Activated T-helper 1 cell treated with anti-CD3 and anti-CD28 coated beads, Interleukin-12 subunit alpha, Interleukin-12 subunit beta, Interleukin-2, Interleukin-4 antibody, amounts not matched to agents 30 ng/mL and 10 ng/mL and 1 ng/mL, durations not matched to agents 14 hours and 24 hours and 36 hours (primary cell): ENCODE measurements at regions of chr3 and their contacts with region 1.

Region 1: DNA sequence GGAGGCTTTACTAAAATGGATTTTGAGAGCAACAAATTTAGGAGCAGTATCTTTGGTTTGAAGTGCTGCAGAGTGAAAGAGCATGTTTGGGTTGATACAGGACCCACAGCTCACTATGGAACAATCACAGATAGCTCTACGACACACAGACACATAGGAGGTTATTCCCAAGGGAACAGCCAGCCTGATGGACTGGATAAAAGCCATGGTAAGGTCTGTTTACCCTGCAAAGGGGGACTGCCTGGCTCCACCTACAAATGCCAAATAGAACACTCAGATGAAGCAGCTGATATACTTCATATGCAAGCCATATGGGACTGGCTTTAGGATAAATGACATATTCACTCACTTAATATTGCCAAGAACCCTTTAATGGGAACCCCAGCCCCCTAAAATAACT is 75.4 kb downstream of the CDC25A start:
- DNase-seq: no peak
- H3K4me3 Mint-ChIP-seq: peak overlapping the region; percentile 38
- H3K27ac Mint-ChIP-seq: peak overlapping the region; percentile 76
- H3K4me1 Mint-ChIP-seq: peaks cover 17% of the 10 kb centered on the region
- H3K27me3 Mint-ChIP-seq: peaks cover 2% of the 10 kb centered on the region

Region 2: DNA sequence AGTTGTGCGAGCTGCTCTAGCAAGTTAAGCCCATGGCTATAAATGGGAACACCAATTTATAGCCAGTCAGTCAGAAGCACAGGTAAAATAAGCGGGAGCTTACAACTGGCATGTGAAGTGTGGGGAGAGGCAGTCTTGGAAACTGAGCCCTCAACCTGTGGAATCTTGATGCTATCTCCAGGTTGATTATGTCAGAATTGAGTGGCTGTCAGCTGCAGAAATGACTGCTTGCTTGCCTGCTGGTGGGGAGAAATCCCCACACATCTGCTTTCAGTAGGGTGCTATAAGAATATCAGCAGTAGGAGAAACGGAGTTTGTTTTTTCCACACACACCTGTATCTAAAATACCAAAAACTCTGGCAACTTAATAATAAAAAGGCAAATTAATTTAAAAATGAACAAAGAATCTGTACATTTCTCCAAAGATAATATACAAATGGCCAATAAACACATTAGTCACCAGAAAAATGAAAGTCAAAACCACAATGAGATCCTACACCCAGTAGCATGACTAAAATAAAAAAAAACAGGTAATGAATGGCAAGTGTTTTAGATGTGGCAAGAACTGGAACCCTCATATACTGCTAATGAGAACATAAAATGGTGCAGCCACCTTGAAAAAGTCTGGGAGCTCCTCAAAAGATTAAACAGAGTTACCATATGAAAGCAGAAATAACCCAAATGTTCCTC is 70.6 kb before region 1 on chr3:
- intact Hi-C with region 1: loop called (anchors 1 kb)
- DNase-seq: no peak
- H3K4me3 Mint-ChIP-seq: no peak overlapping the region
- H3K27ac Mint-ChIP-seq: no peak overlapping the region
- H3K4me1 Mint-ChIP-seq: peaks cover 19% of the 10 kb centered on the region
- H3K27me3 Mint-ChIP-seq: no peaks in the 10 kb centered on the region

Region 3: DNA sequence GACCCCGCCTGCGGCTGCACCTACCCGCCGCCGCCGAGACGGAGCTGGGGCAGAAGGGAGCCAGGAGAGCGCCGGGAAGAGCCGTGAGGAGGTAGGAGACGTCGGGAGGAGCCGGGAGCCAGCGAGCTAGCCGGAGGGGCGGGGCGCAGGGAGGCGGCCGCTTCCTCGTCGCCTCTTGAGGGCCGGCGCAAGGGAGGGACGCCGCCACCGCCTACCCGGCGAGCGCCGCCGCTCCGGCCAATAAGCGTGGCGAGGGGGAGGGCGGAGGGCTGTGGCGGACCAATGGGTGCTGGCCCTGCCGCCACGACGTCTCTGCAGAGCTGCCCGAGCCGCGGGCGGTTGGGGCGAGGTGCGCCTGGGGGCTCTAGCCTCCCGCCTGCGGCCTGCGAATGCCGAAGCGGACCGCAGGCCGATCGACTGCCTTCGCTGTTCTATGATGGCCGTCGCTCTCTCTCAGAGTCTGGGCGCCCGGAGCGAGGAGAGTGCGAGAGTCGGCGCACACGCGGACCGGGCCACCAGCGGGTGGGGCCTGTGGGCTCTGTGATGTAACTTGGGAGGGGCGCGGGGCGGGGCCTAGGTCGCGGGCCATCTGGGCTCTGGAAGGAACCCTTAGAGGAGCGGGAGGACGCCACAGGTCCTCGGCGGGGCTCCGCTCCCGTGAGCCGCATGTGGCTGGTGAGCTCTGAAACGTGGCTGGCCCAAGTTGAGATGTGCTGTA is 23.9 kb before region 1 on chr3:
- intact Hi-C with region 1: loop called (anchors 1 kb)
- DNase-seq: peak; percentile 94
- H3K4me3 Mint-ChIP-seq: peak overlapping the region; percentile 97
- H3K27ac Mint-ChIP-seq: peak overlapping the region; percentile 99
- H3K4me1 Mint-ChIP-seq: peaks cover 35% of the 10 kb centered on the region
- H3K27me3 Mint-ChIP-seq: peaks cover 7% of the 10 kb centered on the region

Region 4: GRCh38 chr3:48478596-48479555 is 366.1 kb after region 1 on chr3:
- intact Hi-C with region 1: no loop called
- DNase-seq: peak; percentile 50
- H3K4me3 Mint-ChIP-seq: peak overlapping the region; percentile 78
- H3K27ac Mint-ChIP-seq: peak overlapping the region; percentile 92
- H3K4me1 Mint-ChIP-seq: peaks cover 46% of the 10 kb centered on the region
- H3K27me3 Mint-ChIP-seq: no peaks in the 10 kb centered on the region